ENCODE measurements at regions of chr3 and their contacts with region 1.

Region 1: GRCh38 chr3:37855363-37855970 is 6.2 kb upstream of the CTDSPL start:
- DNase-seq: peak; percentile 80 to 93 (median 89)
- H3K4me3 ChIP-seq: no peak overlapping the region
- H3K27ac ChIP-seq: no peak overlapping the region
- H3K4me1 ChIP-seq: peaks cover 5% of the 10 kb centered on the region
- H3K27me3 ChIP-seq: no peaks in the 10 kb centered on the region
- CTCF ChIP-seq: peak; percentile 90 to 92 (median 91)
- EP300 ChIP-seq: no peak
- POLR2A ChIP-seq: no peak

Region 2: DNA sequence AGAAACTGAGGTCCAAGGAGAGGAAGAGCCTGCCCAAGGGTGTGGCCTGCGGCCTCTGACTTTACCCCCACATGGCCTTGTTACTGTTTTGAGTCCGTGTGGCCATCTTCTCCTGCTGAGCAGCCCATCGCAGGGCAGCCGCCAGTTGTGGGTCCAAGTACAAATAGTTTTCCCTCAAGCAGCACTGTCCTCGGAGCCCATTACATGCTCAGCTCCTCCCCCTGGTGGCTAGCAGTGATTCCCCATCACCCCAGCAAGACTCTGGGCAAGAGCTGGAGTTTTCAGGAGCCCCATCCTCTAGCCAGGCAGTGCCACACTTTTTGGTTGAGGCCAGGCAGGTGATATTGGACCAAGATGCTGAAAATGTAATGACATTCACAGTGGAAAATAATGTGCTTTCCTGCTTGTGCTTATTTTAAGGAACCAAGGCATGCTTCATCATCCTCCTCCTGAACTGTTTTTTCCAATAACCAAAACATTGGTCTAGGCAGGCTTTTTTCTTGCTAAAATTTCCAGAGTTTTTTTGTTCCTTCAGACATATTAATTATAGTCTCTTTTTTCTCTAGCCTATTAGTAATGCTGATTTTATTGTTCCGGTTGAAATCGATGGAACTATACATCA is 111.9 kb after region 1 on chr3:
- intact Hi-C with region 1: loop called (anchors 2 to 10 kb)
- DNase-seq: peak; percentile 58 to 76 (median 72)
- H3K4me3 ChIP-seq: no peak overlapping the region
- H3K27ac ChIP-seq: no peak overlapping the region
- H3K4me1 ChIP-seq: peaks cover 1% of the 10 kb centered on the region
- H3K27me3 ChIP-seq: no peaks in the 10 kb centered on the region
- CTCF ChIP-seq: peak; percentile 54 to 74 (median 59)
- EP300 ChIP-seq: no peak
- POLR2A ChIP-seq: no peak

Region 3: GRCh38 chr3:38154033-38154494 is 298.6 kb after region 1 on chr3:
- intact Hi-C with region 1: no loop called
- DNase-seq: no peak
- H3K4me3 ChIP-seq: no peak overlapping the region
- H3K27ac ChIP-seq: no peak overlapping the region
- H3K4me1 ChIP-seq: no peaks in the 10 kb centered on the region
- H3K27me3 ChIP-seq: no peaks in the 10 kb centered on the region
- CTCF ChIP-seq: no peak
- EP300 ChIP-seq: no peak
- POLR2A ChIP-seq: no peak

Measured in ovary (tissue), 10 donors.